ENCODE measurements at regions of chr9 and their contacts with region 1.

Region 1: GRCh38 chr9:5886114-5886939 is 4.4 kb upstream of the MLANA start:
- DNase-seq: peak; percentile 28 to 49 (median 46)
- H3K4me3 ChIP-seq: no peak overlapping the region
- H3K4me3 Mint-ChIP-seq: no peak overlapping the region
- H3K27ac ChIP-seq: no peak overlapping the region
- H3K27ac Mint-ChIP-seq: no peak overlapping the region
- H3K4me1 ChIP-seq: no peaks in the 10 kb centered on the region
- H3K4me1 Mint-ChIP-seq: no peaks in the 10 kb centered on the region
- H3K27me3 ChIP-seq: no peaks in the 10 kb centered on the region
- H3K27me3 Mint-ChIP-seq: peaks cover 0 to 3% (median 2%) of the 10 kb centered on the region in 3 donors
- CTCF ChIP-seq: peak; percentile 94

Region 2: DNA sequence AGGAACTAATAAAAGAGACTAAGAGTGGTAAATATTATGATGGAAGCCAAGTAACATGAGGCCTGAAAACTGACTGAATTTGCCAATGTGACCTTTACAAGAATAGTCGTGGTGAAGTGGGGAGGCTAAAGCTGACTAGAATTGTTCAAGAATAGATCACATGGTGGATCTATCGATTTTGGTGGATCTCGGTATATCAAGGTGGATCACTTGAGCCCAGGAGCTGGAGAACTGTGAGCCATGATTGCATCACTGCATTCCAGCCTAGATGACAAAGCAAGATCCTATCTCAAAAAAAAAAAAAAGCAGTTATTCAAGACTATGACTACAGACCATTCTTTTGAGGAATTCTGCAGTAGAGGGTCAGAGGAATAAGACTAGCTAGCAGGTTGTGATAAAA is 68.5 kb before region 1 on chr9:
- intact Hi-C with region 1: no loop called
- DNase-seq: no peak
- H3K4me3 ChIP-seq: no peak overlapping the region
- H3K4me3 Mint-ChIP-seq: no peak overlapping the region
- H3K27ac ChIP-seq: no peak overlapping the region
- H3K27ac Mint-ChIP-seq: peak overlapping the region in 2 of 7 donors; percentile 7 to 11
- H3K4me1 ChIP-seq: no peaks in the 10 kb centered on the region
- H3K4me1 Mint-ChIP-seq: peaks cover 8% of the 10 kb centered on the region
- H3K27me3 ChIP-seq: no peaks in the 10 kb centered on the region
- H3K27me3 Mint-ChIP-seq: no peaks in the 10 kb centered on the region
- CTCF ChIP-seq: no peak

Region 3: GRCh38 chr9:5920860-5921328 is 34.6 kb after region 1 on chr9:
- intact Hi-C with region 1: no loop called
- DNase-seq: no peak
- H3K4me3 ChIP-seq: no peak overlapping the region
- H3K4me3 Mint-ChIP-seq: no peak overlapping the region
- H3K27ac ChIP-seq: no peak overlapping the region
- H3K27ac Mint-ChIP-seq: no peak overlapping the region
- H3K4me1 ChIP-seq: no peaks in the 10 kb centered on the region
- H3K4me1 Mint-ChIP-seq: no peaks in the 10 kb centered on the region
- H3K27me3 ChIP-seq: no peaks in the 10 kb centered on the region
- H3K27me3 Mint-ChIP-seq: no peaks in the 10 kb centered on the region
- CTCF ChIP-seq: no peak

Region 4: GRCh38 chr9:6055213-6055612 is 168.9 kb after region 1 on chr9:
- intact Hi-C with region 1: loop called (anchors 5 to 10 kb)
- DNase-seq: peak; percentile 74 to 78 (median 77)
- H3K4me3 ChIP-seq: no peak overlapping the region
- H3K4me3 Mint-ChIP-seq: no peak overlapping the region
- H3K27ac ChIP-seq: no peak overlapping the region
- H3K27ac Mint-ChIP-seq: no peak overlapping the region
- H3K4me1 ChIP-seq: no peaks in the 10 kb centered on the region
- H3K4me1 Mint-ChIP-seq: peaks cover 4% of the 10 kb centered on the region
- H3K27me3 ChIP-seq: no peaks in the 10 kb centered on the region
- H3K27me3 Mint-ChIP-seq: peaks cover 0 to 6% (median 2%) of the 10 kb centered on the region in 3 donors
- CTCF ChIP-seq: peak; percentile 60

Measured in CD14-positive monocyte (primary cell).